ENCODE measurements at regions of chr2 and their contacts with region 1.

Region 1: GRCh38 chr2:208265801-208266552 is at the start of gene PIKFYVE:
- DNase-seq: peak; percentile 91
- ATAC-seq: peak; percentile 92
- H3K4me3 ChIP-seq: peak within 1 kb of the TSS; percentile 86
- H3K27ac ChIP-seq: peak within 1 kb of the TSS; percentile 93
- H3K4me1 ChIP-seq: peaks cover 8% of the 10 kb centered on the region
- H3K27me3 ChIP-seq: no peaks in the 10 kb centered on the region
- CTCF ChIP-seq: peak in 1 of 3 experiments; percentile 11; a peak in 1 of 6 replicates
- EP300 ChIP-seq: peak; percentile 35 to 71; a peak in 3 of 4 replicates
- POLR2A ChIP-seq: peak; percentile 91
- RAD21 ChIP-seq: no peak; the same call in 1 of the 2 replicates
- polyA plus RNA-seq, gene PIKFYVE: 5.2 to 5.5 TPM

Region 2: DNA sequence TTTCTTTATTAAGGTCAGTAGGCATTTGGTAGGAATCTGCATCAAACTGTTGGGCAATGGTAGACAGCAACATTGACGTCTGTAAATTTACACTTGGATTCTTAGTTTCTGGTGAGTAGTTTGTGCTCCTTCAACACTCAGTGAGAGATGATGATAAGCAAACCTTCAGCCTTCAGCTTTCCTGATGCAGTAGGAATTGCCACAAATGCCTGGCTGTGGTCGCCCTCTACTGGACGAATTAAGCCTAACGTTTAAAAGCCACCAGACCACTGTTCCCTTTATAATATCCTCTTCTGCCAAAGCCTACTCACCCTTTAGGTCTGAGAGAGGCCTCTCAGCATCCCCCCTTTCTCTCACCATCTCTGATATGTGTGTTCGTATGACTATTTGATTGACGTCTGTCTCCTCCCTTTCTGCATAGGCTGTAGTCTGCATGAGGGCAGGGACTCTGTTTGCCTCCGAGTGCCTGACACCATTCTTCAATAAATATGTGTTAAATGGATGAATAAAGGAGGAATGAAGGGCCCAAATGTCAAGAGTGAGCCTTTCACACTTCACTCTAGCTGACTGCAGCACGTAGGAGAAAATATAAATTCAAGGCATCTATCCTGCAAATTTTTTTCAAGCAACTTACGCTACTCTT is 193.6 kb before region 1 on chr2:
- CTCF ChIA-PET with region 1: no interaction called
- POLR2A ChIA-PET with region 1: no interaction called
- RAD21 ChIA-PET with region 1: no interaction called
- SMC1A ChIA-PET with region 1: no interaction called
- in situ Hi-C with region 1: no loop called
- intact Hi-C with region 1: no loop called
- DNase-seq: peak; percentile 19
- ATAC-seq: peak; percentile 97
- H3K4me3 ChIP-seq: no peak overlapping the region
- H3K27ac ChIP-seq: no peak overlapping the region
- H3K4me1 ChIP-seq: no peaks in the 10 kb centered on the region
- H3K27me3 ChIP-seq: no peaks in the 10 kb centered on the region
- CTCF ChIP-seq: peak; percentile 79 to 83 (median 80)
- EP300 ChIP-seq: no peak
- POLR2A ChIP-seq: no peak
- RAD21 ChIP-seq: peak; percentile 92

Region 3: GRCh38 chr2:208175069-208175839 is 90.7 kb before region 1 on chr2:
- CTCF ChIA-PET with region 1: interaction called, 10 read pairs
- POLR2A ChIA-PET with region 1: no interaction called
- RAD21 ChIA-PET with region 1: interaction called, 5 read pairs
- SMC1A ChIA-PET with region 1: interaction called, 3 read pairs
- in situ Hi-C with region 1: no loop called
- intact Hi-C with region 1: no loop called
- DNase-seq: peak; percentile 12
- ATAC-seq: peak; percentile 100
- H3K4me3 ChIP-seq: no peak overlapping the region
- H3K27ac ChIP-seq: no peak overlapping the region
- H3K4me1 ChIP-seq: no peaks in the 10 kb centered on the region
- H3K27me3 ChIP-seq: peaks cover 0 to 5% of the 10 kb centered on the region in 2 experiments; a peak in 1 of 4 replicates
- CTCF ChIP-seq: peak; percentile 88 to 96 (median 90)
- EP300 ChIP-seq: no peak
- POLR2A ChIP-seq: no peak
- RAD21 ChIP-seq: peak; percentile 71

Region 4: DNA sequence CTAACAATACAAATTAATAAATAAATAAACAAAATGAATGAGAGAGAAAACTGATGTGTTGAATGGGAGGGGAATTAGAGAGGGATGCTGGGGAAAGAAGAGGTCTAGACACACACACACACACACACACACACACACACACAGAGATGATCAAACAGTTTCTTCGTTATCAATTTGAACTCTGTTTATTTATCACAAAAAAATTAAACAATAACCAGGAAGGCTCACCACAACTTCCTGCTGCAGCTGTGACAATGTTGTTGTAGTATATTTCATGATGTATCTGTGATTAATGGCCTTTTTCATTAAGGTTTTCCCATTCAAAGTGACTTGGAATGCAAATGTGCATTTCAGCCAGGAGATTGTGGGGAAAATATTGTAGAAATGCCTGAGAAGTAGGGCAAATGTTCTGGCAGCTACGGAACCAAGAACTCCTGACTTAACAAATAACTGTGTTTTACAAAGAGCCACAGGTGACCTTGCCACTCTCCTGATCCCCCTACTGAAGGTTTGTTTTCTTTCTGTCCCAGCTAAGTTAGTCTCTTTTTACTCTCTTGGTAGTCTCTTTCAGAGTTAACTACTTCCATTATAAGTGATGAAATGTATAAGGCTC is 52.4 kb before region 1 on chr2:
- CTCF ChIA-PET with region 1: no interaction called
- POLR2A ChIA-PET with region 1: no interaction called
- RAD21 ChIA-PET with region 1: no interaction called
- SMC1A ChIA-PET with region 1: no interaction called
- in situ Hi-C with region 1: no loop called
- intact Hi-C with region 1: no loop called
- DNase-seq: no peak
- ATAC-seq: no peak
- H3K4me3 ChIP-seq: no peak overlapping the region
- H3K27ac ChIP-seq: no peak overlapping the region
- H3K4me1 ChIP-seq: no peaks in the 10 kb centered on the region
- H3K27me3 ChIP-seq: no peaks in the 10 kb centered on the region
- CTCF ChIP-seq: no peak
- EP300 ChIP-seq: no peak
- POLR2A ChIP-seq: no peak
- RAD21 ChIP-seq: no peak

Region 5: DNA sequence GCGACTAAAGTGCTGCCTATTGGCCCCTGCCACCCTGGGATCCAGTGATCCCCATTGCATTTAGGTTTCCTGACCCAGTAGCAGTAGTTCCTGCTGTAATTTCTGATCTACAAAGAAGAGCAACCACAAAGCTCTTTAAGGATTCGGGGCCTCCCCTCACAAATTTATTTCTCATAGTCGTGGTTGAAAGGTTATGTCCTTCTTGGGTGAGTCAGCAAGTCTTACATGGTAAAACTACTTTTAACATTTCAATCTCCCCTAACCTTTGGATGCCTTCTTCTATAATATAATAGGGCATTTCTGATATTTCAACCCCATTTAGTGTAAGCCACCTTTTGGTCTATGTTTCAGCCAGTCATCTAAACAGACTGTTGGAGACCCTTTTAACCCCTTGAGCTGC is 15.0 kb after region 1 on chr2:
- CTCF ChIA-PET with region 1: interaction called, 6 read pairs
- POLR2A ChIA-PET with region 1: interaction called, 6 read pairs
- RAD21 ChIA-PET with region 1: interaction called, 8 read pairs
- SMC1A ChIA-PET with region 1: interaction called, 31 read pairs
- in situ Hi-C with region 1: no loop called
- intact Hi-C with region 1: no loop called
- DNase-seq: no peak
- ATAC-seq: peak; percentile 54
- H3K4me3 ChIP-seq: no peak overlapping the region
- H3K27ac ChIP-seq: no peak overlapping the region
- H3K4me1 ChIP-seq: peaks cover 3% of the 10 kb centered on the region; the same call in 1 of the 2 replicates
- H3K27me3 ChIP-seq: no peaks in the 10 kb centered on the region
- CTCF ChIP-seq: no peak
- EP300 ChIP-seq: no peak
- POLR2A ChIP-seq: no peak
- RAD21 ChIP-seq: no peak

Region 6: GRCh38 chr2:208315081-208315788 is 49.3 kb after region 1 on chr2:
- CTCF ChIA-PET with region 1: interaction called, 14 read pairs
- POLR2A ChIA-PET with region 1: interaction called, 68 read pairs
- RAD21 ChIA-PET with region 1: interaction called, 11 read pairs
- SMC1A ChIA-PET with region 1: interaction called, 77 read pairs
- in situ Hi-C with region 1: no loop called
- intact Hi-C with region 1: loop called (anchors 1 kb)
- DNase-seq: peak; percentile 73
- ATAC-seq: peak; percentile 56
- H3K4me3 ChIP-seq: peak overlapping the region; percentile 25; the same call in 1 of the 2 replicates
- H3K27ac ChIP-seq: peak overlapping the region; percentile 17
- H3K4me1 ChIP-seq: peaks cover 27% of the 10 kb centered on the region
- H3K27me3 ChIP-seq: no peaks in the 10 kb centered on the region
- CTCF ChIP-seq: peak; percentile 8 to 24 (median 24); a peak in 3 of 6 replicates
- EP300 ChIP-seq: peak; percentile 20 to 40; a peak in 2 of 4 replicates
- POLR2A ChIP-seq: no peak
- RAD21 ChIP-seq: 0 out of 2 replicates have a peak, but pooled peaks have one; percentile 17

Region 7: DNA sequence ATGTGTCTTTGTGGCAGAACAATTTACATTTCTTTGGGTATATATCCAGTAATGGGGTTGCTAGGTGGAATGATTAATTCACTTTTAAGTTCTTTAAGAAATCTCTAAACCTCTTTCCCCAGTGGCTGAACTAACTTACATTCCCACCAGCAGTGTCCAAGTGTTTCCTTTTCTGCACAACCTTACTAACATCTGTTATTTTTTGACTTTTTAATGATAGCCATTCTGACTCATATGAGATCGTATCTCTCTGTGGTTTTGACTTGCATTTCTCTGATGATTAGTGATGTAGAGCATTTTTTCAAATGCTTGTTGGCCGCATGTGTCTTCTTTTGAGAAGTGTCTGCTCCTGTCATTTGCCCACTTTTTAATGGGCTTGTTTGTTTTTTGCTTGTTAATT is 97.5 kb after region 1 on chr2:
- CTCF ChIA-PET with region 1: no interaction called
- POLR2A ChIA-PET with region 1: interaction called, 3 read pairs
- RAD21 ChIA-PET with region 1: interaction called, 3 read pairs
- SMC1A ChIA-PET with region 1: interaction called, 5 read pairs
- in situ Hi-C with region 1: no loop called
- intact Hi-C with region 1: loop called (anchors 5 kb)
- DNase-seq: peak; percentile 23
- ATAC-seq: peak; percentile 75
- H3K4me3 ChIP-seq: no peak overlapping the region
- H3K27ac ChIP-seq: no peak overlapping the region
- H3K4me1 ChIP-seq: no peaks in the 10 kb centered on the region; the same call in 1 of the 2 replicates
- H3K27me3 ChIP-seq: no peaks in the 10 kb centered on the region
- CTCF ChIP-seq: no peak
- EP300 ChIP-seq: no peak
- POLR2A ChIP-seq: no peak
- RAD21 ChIP-seq: no peak

Region 8: GRCh38 chr2:208440716-208441115 is 174.7 kb after region 1 on chr2:
- CTCF ChIA-PET with region 1: no interaction called
- POLR2A ChIA-PET with region 1: no interaction called
- RAD21 ChIA-PET with region 1: no interaction called
- SMC1A ChIA-PET with region 1: no interaction called
- in situ Hi-C with region 1: no loop called
- intact Hi-C with region 1: no loop called
- DNase-seq: no peak
- ATAC-seq: no peak; the same call in 2 of the 3 replicates
- H3K4me3 ChIP-seq: no peak overlapping the region
- H3K27ac ChIP-seq: no peak overlapping the region
- H3K4me1 ChIP-seq: no peaks in the 10 kb centered on the region
- H3K27me3 ChIP-seq: no peaks in the 10 kb centered on the region
- CTCF ChIP-seq: no peak
- EP300 ChIP-seq: no peak
- POLR2A ChIP-seq: no peak
- RAD21 ChIP-seq: no peak